Activated CD8-positive, alpha-beta T cell treated with anti-CD3 and anti-CD28 coated beads for 36 hours (primary cell): ENCODE measurements at regions of chr2 and their contacts with region 1.

Region 1: GRCh38 chr2:38818565-38818964 is 40.6 kb downstream of the GEMIN6 start:
- DNase-seq: no peak
- ATAC-seq: no peak
- H3K4me3 Mint-ChIP-seq: no peak overlapping the region
- H3K27ac Mint-ChIP-seq: no peak overlapping the region
- H3K4me1 Mint-ChIP-seq: no peaks in the 10 kb centered on the region
- H3K27me3 Mint-ChIP-seq: no peaks in the 10 kb centered on the region
- CTCF ChIP-seq: no peak

Region 2: DNA sequence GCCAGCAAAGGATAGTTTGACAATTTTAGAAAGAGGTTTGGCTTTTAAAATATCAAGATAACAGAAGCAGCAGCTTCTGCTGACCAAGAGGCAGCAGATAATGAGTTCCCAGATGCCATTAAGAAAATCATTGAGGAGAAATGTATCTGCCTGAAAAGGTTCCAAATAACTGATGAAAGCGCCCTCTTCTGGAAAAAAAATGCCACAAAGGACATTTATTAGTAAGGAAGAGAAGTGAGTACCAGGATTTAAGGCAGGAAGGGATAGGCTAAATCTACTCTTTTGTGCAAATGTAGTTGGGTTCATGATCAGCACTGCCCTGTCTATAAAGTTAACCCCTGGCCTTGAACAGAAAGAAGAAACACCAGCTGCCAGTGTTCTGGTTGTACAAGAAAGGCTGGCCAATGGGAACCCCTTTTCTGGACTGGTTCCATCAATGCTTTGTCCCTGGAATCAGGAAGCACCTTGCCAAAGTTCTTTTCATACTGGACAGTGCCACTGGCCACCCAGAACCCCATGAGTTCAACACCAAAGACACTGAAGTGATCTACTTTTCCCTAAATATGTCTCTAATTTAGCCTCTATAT is 16.5 kb after region 1 on chr2:
- CTCF ChIA-PET with region 1: interaction called, 15 read pairs
- POLR2A ChIA-PET with region 1: no interaction called
- intact Hi-C with region 1: no loop called
- DNase-seq: no peak
- ATAC-seq: no peak
- H3K4me3 Mint-ChIP-seq: no peak overlapping the region
- H3K27ac Mint-ChIP-seq: no peak overlapping the region
- H3K4me1 Mint-ChIP-seq: no peaks in the 10 kb centered on the region
- H3K27me3 Mint-ChIP-seq: no peaks in the 10 kb centered on the region
- CTCF ChIP-seq: peak; percentile 57

Region 3: GRCh38 chr2:38863378-38863695 is 44.8 kb after region 1 on chr2:
- CTCF ChIA-PET with region 1: no interaction called
- POLR2A ChIA-PET with region 1: no interaction called
- intact Hi-C with region 1: no loop called
- DNase-seq: no peak
- ATAC-seq: no peak
- H3K4me3 Mint-ChIP-seq: no peak overlapping the region
- H3K27ac Mint-ChIP-seq: peak overlapping the region; percentile 13
- H3K4me1 Mint-ChIP-seq: peaks cover 3% of the 10 kb centered on the region
- H3K27me3 Mint-ChIP-seq: no peaks in the 10 kb centered on the region
- CTCF ChIP-seq: no peak